Activated T-helper 2 cell treated with anti-CD3 and anti-CD28 coated beads, Interferon-gamma antibody, Interleukin-2, Interleukin-4, amounts not matched to agents 10 μg/mL and 5 μg/mL and 100 μg/mL, durations not matched to agents 14 hours and 24 hours and 36 hours (primary cell): ENCODE measurements at regions of chr5 and their contacts with region 1.

Region 1: GRCh38 chr5:150217873-150218692 is 28.2 kb downstream of the SLC6A7 start:
- DNase-seq: peak; percentile 65
- H3K4me3 Mint-ChIP-seq: no peak overlapping the region
- H3K27ac Mint-ChIP-seq: no peak overlapping the region
- H3K4me1 Mint-ChIP-seq: no peaks in the 10 kb centered on the region
- H3K27me3 Mint-ChIP-seq: peaks cover 4% of the 10 kb centered on the region

Region 2: DNA sequence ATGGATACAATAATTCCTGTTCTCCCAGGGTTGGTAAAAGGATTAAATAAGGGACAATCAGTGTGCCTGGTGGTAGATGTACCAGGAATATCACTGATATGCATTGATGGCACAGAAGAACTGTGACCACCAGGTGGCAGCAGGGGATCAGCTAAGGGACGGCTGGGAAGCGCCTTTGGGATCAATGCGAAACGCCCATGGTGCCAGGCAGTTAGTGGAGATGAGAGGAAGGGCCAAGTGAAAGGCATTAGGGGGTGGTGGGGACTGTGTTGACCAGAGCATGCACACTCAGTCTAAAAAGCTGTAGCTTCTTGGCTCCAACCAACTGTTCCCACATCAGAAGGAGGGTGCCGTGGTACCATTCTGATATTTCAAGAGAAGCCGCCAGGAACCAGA is 581.2 kb before region 1 on chr5:
- intact Hi-C with region 1: loop called (anchors 5 kb)
- DNase-seq: no peak
- H3K4me3 Mint-ChIP-seq: no peak overlapping the region
- H3K27ac Mint-ChIP-seq: no peak overlapping the region
- H3K4me1 Mint-ChIP-seq: peaks cover 18% of the 10 kb centered on the region
- H3K27me3 Mint-ChIP-seq: no peaks in the 10 kb centered on the region

Region 3: DNA sequence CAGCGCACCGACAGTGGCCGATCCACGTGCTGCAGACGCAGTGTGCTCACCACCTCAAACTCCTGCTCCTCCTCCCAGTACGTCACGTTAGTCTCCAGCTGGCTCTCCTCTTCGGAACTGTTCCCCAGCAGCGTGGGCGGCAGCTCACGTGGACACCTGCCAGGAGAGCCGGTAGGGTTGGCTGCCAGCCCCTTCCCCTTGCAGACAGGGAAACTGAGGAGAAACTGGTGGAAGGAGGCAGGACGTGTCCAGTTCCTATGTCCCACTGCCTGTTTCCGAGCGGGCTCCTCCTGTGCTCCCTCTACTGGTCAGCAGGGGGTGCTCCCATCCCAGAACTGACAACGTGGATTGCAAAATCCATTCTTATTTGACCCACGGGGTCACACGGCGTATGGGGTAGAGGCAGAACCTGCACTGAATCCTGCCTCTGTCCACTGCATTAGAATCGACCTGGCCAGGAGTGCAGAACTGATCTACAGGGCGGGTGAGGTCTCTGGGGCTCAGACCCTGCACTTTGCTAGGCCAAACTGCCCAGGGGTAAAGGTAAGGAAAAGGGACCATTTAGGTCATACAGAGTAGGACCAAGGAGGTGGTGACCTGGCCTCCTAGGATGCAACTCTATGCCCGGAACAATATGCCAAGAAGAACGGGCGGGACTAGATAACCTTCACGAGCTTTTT is 88.1 kb before region 1 on chr5:
- intact Hi-C with region 1: loop called (anchors 1 kb)
- DNase-seq: peak; percentile 28
- H3K4me3 Mint-ChIP-seq: no peak overlapping the region
- H3K27ac Mint-ChIP-seq: no peak overlapping the region
- H3K4me1 Mint-ChIP-seq: no peaks in the 10 kb centered on the region
- H3K27me3 Mint-ChIP-seq: no peaks in the 10 kb centered on the region

Region 4: DNA sequence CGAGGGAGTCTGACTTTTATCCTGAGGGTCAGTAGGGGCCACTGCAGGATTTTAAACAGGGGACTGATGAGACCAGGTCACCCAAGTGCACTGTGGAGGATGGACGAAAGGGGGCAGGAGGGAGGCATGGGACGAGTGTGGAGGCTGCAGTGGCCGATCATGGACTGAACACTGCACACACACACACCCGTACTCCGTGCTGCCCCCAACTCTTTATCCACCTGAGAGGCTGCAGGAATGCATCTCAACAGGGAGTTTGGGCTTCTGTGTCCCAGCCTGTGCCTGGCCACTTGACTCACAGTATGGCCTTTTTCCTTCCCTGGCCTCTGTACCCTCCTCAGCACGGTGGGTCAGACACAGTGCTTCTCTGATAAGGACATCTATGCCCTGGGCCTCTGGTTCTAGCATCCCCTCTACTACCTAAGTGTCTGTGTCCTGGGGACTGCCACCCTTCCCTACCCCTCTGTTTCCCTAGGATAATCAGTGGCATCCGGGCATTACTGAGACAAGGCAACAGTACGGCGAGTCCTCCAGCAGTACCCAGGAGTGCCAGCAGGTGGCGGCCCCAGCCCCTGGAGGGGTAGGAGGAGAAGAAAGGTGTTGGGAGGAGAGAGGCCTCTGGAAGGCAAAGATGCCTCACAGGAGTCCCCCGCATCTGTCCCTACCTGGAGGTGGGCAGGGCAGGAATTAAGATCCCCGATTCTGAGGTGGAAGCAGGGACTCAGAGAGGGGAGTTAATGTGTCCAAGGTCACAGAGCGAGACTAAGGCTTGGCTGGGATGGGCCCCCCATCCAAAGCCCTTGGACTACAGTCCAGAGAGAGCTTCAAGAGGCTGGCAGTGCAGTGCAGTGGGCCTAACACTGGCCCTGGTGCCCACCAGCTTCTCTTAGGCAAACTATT is 56.6 kb before region 1 on chr5:
- intact Hi-C with region 1: loop called (anchors 1 kb)
- DNase-seq: peak; percentile 60
- H3K4me3 Mint-ChIP-seq: no peak overlapping the region
- H3K27ac Mint-ChIP-seq: no peak overlapping the region
- H3K4me1 Mint-ChIP-seq: no peaks in the 10 kb centered on the region
- H3K27me3 Mint-ChIP-seq: peaks cover 21% of the 10 kb centered on the region

Region 5: GRCh38 chr5:150636401-150637244 is 418.5 kb after region 1 on chr5:
- intact Hi-C with region 1: no loop called
- DNase-seq: no peak
- H3K4me3 Mint-ChIP-seq: no peak overlapping the region
- H3K27ac Mint-ChIP-seq: no peak overlapping the region
- H3K4me1 Mint-ChIP-seq: no peaks in the 10 kb centered on the region
- H3K27me3 Mint-ChIP-seq: peaks cover 19% of the 10 kb centered on the region